Psoas muscle (tissue), 8 donors: ENCODE measurements at regions of chr19 and their contacts with region 1.

Region 1: GRCh38 chr19:31023038-31023437 is 326.2 kb downstream of the TSHZ3 start:
- DNase-seq: no peak
- ATAC-seq: no peak
- H3K4me3 ChIP-seq: no peak overlapping the region
- H3K27ac ChIP-seq: no peak overlapping the region
- H3K4me1 ChIP-seq: no peaks in the 10 kb centered on the region
- H3K27me3 ChIP-seq: peaks cover 0 to 6% (median 3%) of the 10 kb centered on the region in 3 donors
- CTCF ChIP-seq: no peak

Region 2: DNA sequence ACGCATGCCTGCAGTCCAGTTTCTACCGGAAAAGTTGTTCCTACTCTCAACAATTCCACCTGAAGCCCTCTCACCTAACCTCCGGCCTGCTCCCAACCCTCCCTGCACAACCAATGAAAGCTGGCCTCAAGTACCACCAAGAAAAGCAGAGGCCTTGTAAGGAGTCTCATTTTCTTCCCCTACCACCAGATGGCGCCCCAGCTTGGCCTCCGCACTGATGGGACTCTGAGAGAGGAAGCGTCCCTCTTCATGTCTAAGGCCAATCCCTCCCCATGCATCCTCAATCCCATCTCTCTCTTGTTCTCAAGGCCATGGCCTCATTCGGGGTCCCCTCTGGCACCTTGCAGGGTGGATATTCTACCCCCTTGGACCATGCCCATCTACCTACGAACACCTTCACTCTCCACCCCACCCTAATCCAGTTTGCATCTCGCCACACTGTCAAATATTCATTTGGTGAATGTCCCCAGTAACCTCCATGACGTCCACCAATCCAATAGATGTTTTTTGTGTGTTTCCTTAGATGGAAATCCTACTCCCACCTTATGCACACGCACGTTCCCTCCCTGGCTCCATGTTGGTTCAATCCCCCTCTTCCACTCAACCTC is 238.1 kb before region 1 on chr19:
- intact Hi-C with region 1: no loop called
- DNase-seq: peak; percentile 48 to 61
- ATAC-seq: peak in 2 of 4 donors; percentile 50 to 54
- H3K4me3 ChIP-seq: no peak overlapping the region
- H3K27ac ChIP-seq: no peak overlapping the region
- H3K4me1 ChIP-seq: no peaks in the 10 kb centered on the region
- H3K27me3 ChIP-seq: no peaks in the 10 kb centered on the region
- CTCF ChIP-seq: peak; percentile 60

Region 3: GRCh38 chr19:31055454-31055853 is 32.4 kb after region 1 on chr19:
- intact Hi-C with region 1: loop called in 1 of 2 experiments (anchors 1 kb)
- DNase-seq: no peak
- ATAC-seq: no peak
- H3K4me3 ChIP-seq: no peak overlapping the region
- H3K27ac ChIP-seq: no peak overlapping the region
- H3K4me1 ChIP-seq: no peaks in the 10 kb centered on the region
- H3K27me3 ChIP-seq: no peaks in the 10 kb centered on the region
- CTCF ChIP-seq: no peak